AG04450 (cell line): ENCODE measurements at regions of chr1 and their contacts with region 1.

Region 1: GRCh38 chr1:151098126-151098525 is 27.6 kb downstream of the GABPB2 start:
- DNase-seq: no peak
- H3K4me3 ChIP-seq: no peak overlapping the region
- H3K27ac ChIP-seq: no peak overlapping the region
- H3K27me3 ChIP-seq: no peaks in the 10 kb centered on the region
- CTCF ChIP-seq: no peak

Region 2: GRCh38 chr1:150925816-150926741 is 172.0 kb before region 1 on chr1 and contains the start of gene SETDB1:
- CTCF ChIA-PET with region 1: no interaction called
- POLR2A ChIA-PET with region 1: no interaction called
- DNase-seq: peak; percentile 89
- H3K4me3 ChIP-seq: peak within 1 kb of the TSS; percentile 70
- H3K27ac ChIP-seq: peak within 1 kb of the TSS; percentile 75
- H3K27me3 ChIP-seq: no peaks in the 10 kb centered on the region
- CTCF ChIP-seq: 0 out of 2 replicates have a peak, but pooled peaks have one; percentile 7
- polyA plus RNA-seq, gene SETDB1: 30.8 and 35.5 TPM in 2 replicates

Region 3: GRCh38 chr1:151070474-151071276 is 27.5 kb before region 1 on chr1 and contains the start of gene GABPB2:
- CTCF ChIA-PET with region 1: interaction called, 21 read pairs
- POLR2A ChIA-PET with region 1: interaction called, 3 read pairs
- DNase-seq: peak; percentile 93
- H3K4me3 ChIP-seq: peak within 1 kb of the TSS; percentile 79
- H3K27ac ChIP-seq: peak within 1 kb of the TSS; percentile 99
- H3K27me3 ChIP-seq: no peaks in the 10 kb centered on the region
- CTCF ChIP-seq: peak; percentile 88
- polyA plus RNA-seq, gene GABPB2: 9.8 and 10.0 TPM in 2 replicates

Region 4: DNA sequence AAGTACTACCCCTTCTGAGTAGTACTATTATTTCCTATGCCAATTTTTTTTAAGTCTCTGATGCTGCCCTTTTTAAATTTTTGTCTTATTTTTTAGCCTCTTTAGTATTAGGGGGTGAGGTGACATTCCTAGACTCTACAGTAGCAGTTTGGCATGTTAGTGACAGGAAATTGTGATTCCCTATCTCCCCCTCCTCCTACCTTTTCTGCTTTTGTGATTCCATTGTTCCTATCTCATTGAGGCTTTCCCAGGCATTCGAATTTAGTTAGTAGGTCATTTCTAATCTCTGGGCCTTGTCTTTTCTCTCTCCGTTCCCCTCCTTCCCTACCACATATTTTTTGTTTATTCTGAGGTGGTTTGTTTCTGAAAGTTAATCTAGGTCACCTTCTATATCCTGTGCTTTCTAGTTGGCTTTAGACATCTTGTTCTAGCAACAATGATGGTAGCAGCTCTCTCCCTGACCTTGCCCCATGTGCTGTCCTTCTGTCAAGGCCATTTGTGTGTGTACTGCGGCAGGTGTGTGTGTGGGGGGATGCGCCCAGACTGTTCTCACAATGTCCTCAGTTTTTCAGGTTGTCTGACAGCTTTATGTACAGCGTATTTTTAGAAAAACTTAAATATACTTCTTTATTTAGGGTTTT is 26.8 kb after region 1 on chr1:
- CTCF ChIA-PET with region 1: interaction called, 10 read pairs
- POLR2A ChIA-PET with region 1: no interaction called
- DNase-seq: no peak
- H3K4me3 ChIP-seq: no peak overlapping the region
- H3K27ac ChIP-seq: no peak overlapping the region
- H3K27me3 ChIP-seq: no peaks in the 10 kb centered on the region
- CTCF ChIP-seq: no peak

Region 5: GRCh38 chr1:151146412-151147140 is 48.5 kb after region 1 on chr1 and contains the start of gene SEMA6C:
- CTCF ChIA-PET with region 1: interaction called, 16 read pairs
- POLR2A ChIA-PET with region 1: no interaction called
- DNase-seq: peak; percentile 68
- H3K4me3 ChIP-seq: peak within 1 kb of the TSS; percentile 73
- H3K27ac ChIP-seq: no peak within 1 kb of the TSS
- H3K27me3 ChIP-seq: no peaks in the 10 kb centered on the region
- CTCF ChIP-seq: no peak
- polyA plus RNA-seq, gene SEMA6C: 1.3 and 1.8 TPM in 2 replicates

Region 6: DNA sequence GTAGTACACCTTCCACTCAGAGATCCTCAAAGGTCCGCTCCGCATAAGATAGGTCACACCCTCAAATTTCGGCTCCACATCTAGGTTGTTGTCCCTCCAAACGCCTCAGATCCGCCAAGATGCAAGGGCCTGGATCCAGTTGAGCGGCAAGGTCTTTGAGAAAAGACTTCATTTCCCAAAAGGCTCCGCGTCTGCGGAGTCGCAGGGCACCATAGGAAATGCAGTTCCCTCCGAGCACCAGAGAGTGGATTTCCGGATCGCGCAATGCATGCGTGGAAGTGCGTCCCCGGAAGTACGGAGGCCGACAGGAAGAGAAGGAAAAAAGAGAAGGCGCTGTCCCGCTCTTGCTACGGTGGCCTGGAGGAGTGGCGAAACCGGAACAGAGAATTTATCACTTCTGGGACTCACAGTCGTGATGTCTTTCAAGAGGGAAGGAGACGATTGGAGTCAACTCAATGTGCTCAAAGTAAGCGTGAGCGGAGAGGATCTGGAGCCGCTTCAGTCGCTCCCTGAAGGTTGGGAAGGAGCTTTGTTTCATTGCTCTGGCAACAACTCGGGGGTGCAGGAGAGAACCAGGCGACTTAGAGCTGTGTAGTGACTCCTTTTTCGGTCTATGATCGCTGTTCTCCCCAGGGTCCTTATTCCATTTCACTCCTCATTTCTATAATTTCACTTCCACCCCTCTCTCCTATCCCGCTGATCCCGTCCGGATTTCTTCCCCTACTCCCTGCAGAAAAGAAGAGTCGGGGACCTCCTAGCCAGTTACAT is 67.8 kb after region 1 on chr1 and contains the starts of genes LYSMD1 and SCNM1:
- CTCF ChIA-PET with region 1: interaction called, 16 read pairs
- POLR2A ChIA-PET with region 1: no interaction called
- DNase-seq: peak; percentile 98
- H3K4me3 ChIP-seq: peak within 1 kb of the TSS; percentile 99
- H3K27ac ChIP-seq: peak within 1 kb of the TSS; percentile 87
- H3K27me3 ChIP-seq: no peaks in the 10 kb centered on the region
- CTCF ChIP-seq: no peak
- polyA plus RNA-seq, gene LYSMD1: 9.1 and 9.6 TPM in 2 replicates
- polyA plus RNA-seq, gene SCNM1: 24.9 and 29.2 TPM in 2 replicates

Region 7: GRCh38 chr1:151254217-151255213 is 156.4 kb after region 1 on chr1 and contains the start of gene PSMD4:
- CTCF ChIA-PET with region 1: interaction called, 31 read pairs
- POLR2A ChIA-PET with region 1: no interaction called
- DNase-seq: peak; percentile 88
- H3K4me3 ChIP-seq: peak within 1 kb of the TSS; percentile 84
- H3K27ac ChIP-seq: peak within 1 kb of the TSS; percentile 83
- H3K27me3 ChIP-seq: no peaks in the 10 kb centered on the region
- CTCF ChIP-seq: no peak
- polyA plus RNA-seq, gene PSMD4: 258 and 275 TPM in 2 replicates

Region 8: GRCh38 chr1:151510957-151511635 is 413.0 kb after region 1 on chr1 and contains the start of gene CGN:
- CTCF ChIA-PET with region 1: no interaction called
- POLR2A ChIA-PET with region 1: no interaction called
- DNase-seq: peak; percentile 43
- H3K4me3 ChIP-seq: peak within 1 kb of the TSS; percentile 69
- H3K27ac ChIP-seq: no peak within 1 kb of the TSS
- H3K27me3 ChIP-seq: peaks cover 5% of the 10 kb centered on the region
- CTCF ChIP-seq: no peak
- polyA plus RNA-seq, gene CGN: 0.26 and 0.31 TPM in 2 replicates